ENCODE measurements at regions of chr15 and their contacts with region 1.

Region 1: GRCh38 chr15:89017370-89018066 is 70.7 kb upstream of the ABHD2 start:
- ATAC-seq: peak; percentile 92 to 98 (median 95)
- H3K4me3 ChIP-seq: peak overlapping the region in 3 of 5 donors; percentile 2 to 17 (median 4)
- H3K27ac ChIP-seq: peak overlapping the region; percentile 35 to 70
- H3K4me1 ChIP-seq: peaks cover 16 to 21% of the 10 kb centered on the region in 2 donors

Region 2: GRCh38 chr15:88166082-88166993 is 851.2 kb before region 1 on chr15:
- in situ Hi-C with region 1: no loop called
- ATAC-seq: peak; percentile 68 to 87 (median 80)
- H3K4me3 ChIP-seq: no peak overlapping the region
- H3K27ac ChIP-seq: no peak overlapping the region
- H3K4me1 ChIP-seq: peaks cover 8 to 16% of the 10 kb centered on the region in 2 donors

Region 3: DNA sequence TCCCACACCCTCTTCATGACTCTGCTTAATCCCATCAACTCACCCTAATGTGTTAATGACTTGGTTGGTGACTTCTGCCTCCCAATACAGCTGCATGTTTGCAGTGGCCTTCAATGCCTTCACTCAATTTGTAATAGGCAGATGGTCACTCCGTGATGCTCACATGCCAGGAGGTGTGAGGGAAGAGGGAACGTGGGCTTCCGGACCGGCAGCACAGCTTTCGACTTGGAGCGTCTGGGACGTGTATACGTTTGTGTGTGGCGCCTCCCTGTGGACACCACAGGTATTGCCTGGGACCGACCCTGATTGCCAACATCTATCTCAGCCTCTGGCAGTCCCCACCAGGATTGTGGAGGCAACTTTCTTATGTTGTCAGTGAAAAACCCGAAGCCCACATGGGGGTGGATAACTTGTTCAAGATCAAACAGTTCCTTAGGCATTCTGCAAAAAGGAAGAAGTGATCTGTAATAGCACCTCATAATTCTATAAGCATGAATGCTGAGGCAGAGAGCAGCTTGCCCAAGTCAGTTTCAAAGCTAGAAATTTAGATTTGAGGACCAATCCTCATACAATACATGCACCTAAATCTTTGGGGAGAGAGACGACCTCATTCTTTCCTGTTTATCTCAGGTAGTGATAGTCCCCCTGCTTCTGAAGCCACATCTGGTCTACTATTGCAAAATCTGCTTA is 567.3 kb before region 1 on chr15:
- in situ Hi-C with region 1: no loop called
- ATAC-seq: peak; percentile 45 to 85 (median 72)
- H3K4me3 ChIP-seq: no peak overlapping the region
- H3K27ac ChIP-seq: no peak overlapping the region
- H3K4me1 ChIP-seq: no peaks in the 10 kb centered on the region

Region 4: GRCh38 chr15:88476635-88477060 is 540.9 kb before region 1 on chr15:
- in situ Hi-C with region 1: loop called in 1 of 9 experiments (anchors 25 kb)
- ATAC-seq: peak; percentile 66 to 86 (median 81)
- H3K4me3 ChIP-seq: no peak overlapping the region
- H3K27ac ChIP-seq: no peak overlapping the region
- H3K4me1 ChIP-seq: peaks cover 0 to 5% of the 10 kb centered on the region in 2 donors

Region 5: DNA sequence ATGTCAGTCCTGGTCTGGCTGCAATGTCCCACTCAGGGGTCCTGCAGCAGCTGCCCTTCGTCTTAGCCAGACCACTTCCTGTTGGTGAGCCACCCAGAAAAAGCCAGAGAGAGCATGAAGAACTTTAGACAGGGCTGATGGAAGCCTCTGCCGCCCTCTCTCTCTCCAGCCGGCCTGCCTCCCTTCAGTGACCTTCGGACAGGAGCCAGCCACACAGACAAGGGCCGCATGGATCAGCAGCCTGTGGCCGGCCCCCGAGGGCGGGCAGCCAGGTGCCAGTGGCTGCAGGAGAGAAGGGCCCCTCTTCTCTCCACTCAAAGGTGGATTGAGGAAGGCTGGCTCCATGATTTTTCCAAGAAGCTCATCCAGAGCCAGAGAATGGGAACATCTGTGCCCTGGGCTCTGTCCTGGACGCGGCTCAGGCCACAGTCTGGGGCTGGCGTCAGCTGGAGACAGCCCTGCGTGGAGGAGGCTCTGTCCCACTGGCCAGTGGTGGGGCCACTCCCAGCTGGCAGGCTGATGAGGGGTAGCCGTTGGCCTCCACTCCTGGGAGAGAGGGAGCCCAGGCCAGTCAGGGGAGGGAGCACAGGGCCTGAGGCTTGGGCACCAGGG is 335.8 kb before region 1 on chr15:
- in situ Hi-C with region 1: loop called in 1 of 9 experiments (anchors 25 kb)
- ATAC-seq: peak in 3 of 8 experiments; percentile 19 to 75 (median 55)
- H3K4me3 ChIP-seq: no peak overlapping the region
- H3K27ac ChIP-seq: no peak overlapping the region
- H3K4me1 ChIP-seq: no peaks in the 10 kb centered on the region

Region 6: GRCh38 chr15:88904624-88905327 is 112.7 kb before region 1 on chr15:
- in situ Hi-C with region 1: loop called in 2 of 9 experiments (anchors 10 to 25 kb)
- ATAC-seq: peak; percentile 64 to 95 (median 84)
- H3K4me3 ChIP-seq: no peak overlapping the region
- H3K27ac ChIP-seq: no peak overlapping the region
- H3K4me1 ChIP-seq: peaks cover 7 to 17% of the 10 kb centered on the region in 2 donors

Region 7: GRCh38 chr15:89206908-89207331 is 189.4 kb after region 1 on chr15:
- in situ Hi-C with region 1: no loop called
- ATAC-seq: peak; percentile 71 to 100 (median 96)
- H3K4me3 ChIP-seq: no peak overlapping the region
- H3K27ac ChIP-seq: no peak overlapping the region
- H3K4me1 ChIP-seq: peaks cover 0 to 9% of the 10 kb centered on the region in 2 donors